Activated T-helper 2 cell treated with anti-CD3 and anti-CD28 coated beads, Interferon-gamma antibody, Interleukin-2, Interleukin-4, amounts not matched to agents 10 μg/mL and 5 μg/mL and 100 μg/mL, durations not matched to agents 14 hours and 24 hours and 36 hours (primary cell): ENCODE measurements at regions of chr18 and their contacts with region 1.

Region 1: DNA sequence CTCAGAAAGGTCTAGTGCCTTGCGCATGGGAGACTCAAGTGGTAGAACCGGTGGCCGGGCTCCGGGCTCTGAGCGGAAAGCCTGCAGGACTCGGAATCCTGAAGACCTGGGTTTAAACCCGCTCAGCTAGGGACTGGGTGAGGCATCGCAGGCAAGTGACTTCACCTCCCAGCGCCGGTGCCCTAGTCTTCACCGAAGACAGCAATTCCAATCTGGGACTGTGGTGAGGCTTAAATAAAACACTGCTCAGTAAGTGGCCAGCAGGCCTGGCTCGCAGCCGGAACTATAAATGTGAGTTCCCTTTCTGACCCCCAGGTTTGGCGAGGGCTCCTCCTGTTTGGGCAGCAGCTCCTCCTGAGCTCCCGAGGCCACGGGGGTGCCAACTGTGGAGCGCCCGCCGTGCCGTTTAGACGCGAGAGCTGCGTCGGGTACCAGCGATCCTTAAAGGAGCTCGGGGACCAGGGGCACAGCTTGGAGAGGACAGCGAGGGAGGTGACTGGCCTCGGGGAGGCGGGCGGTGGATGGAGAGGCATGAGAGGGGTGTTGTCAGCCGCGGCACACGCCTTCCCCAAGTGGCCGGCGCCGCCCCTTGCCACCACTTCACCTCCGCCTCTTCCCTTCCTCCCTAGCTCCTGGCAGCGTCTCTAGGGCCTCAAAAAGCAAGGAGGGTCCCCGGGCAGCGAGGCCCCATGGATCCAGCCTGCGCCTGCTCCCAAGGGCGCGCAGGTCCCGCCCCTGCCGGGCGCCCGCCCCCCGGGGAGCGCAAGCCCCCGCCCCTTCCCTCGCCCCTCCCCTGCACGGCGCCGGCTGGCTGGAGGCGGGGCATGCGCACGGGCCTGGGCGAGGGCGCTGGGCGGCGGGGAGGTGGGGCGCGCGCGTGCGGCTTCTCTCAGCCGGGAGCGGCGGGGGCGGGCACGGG is 736 bp upstream of the MTCL1 start:
- DNase-seq: peak; percentile 77
- H3K4me3 Mint-ChIP-seq: peak overlapping the region; percentile 85
- H3K27ac Mint-ChIP-seq: no peak overlapping the region
- H3K4me1 Mint-ChIP-seq: peaks cover 13% of the 10 kb centered on the region
- H3K27me3 Mint-ChIP-seq: peaks cover 72% of the 10 kb centered on the region

Region 2: DNA sequence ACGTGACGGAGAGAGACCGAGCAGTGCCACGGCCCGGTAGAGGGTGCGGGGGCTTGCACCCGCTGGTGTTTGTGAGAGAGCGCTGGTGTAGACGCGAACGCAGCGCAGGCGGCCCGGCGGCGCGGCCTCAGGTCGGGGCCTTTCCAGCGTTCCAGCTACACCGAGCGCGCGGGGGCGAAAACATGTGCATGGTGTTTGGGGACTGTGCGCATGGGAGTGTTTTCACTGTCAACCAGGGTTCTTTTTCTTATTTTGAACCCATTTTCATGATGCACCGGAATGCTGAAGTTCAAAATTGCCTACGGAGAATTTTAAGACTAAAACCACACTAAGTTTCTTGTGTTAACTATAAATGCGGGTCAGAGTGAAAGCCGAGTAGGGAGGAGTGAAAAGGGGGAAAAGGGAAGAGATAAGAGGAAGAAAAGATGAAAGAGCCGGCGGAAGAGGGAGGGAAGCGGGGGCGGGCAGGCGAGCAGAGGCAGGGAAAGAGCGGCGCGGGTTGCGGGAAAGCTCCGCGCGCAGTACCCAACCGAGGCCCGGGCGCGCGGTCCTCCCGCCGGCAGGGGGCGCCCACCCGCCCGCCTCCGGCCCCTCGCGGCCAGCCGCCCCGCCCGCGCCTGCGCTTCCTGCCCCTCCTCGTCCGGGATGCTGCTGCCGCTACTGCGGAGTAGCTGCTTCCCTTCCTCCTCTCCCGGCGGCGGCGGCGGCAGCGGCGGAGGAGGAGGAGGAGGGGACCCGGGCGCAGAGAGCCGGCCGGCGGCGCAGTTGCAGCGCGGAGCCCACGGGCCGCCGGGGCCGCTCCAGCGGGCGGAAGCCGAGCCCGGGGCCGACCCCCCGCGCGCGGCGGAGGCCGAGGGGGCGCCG is 95.6 kb before region 1 on chr18 and contains the start of gene RAB12:
- intact Hi-C with region 1: loop called (anchors 10 kb)
- DNase-seq: peak; percentile 79
- H3K4me3 Mint-ChIP-seq: peak within 1 kb of the TSS; percentile 94
- H3K27ac Mint-ChIP-seq: peak within 1 kb of the TSS; percentile 85
- H3K4me1 Mint-ChIP-seq: peaks cover 50% of the 10 kb centered on the region
- H3K27me3 Mint-ChIP-seq: peaks cover 20% of the 10 kb centered on the region
- total RNA-seq, gene RAB12: 14.7 and 17.2 TPM in 2 replicates

Region 3: GRCh38 chr18:9334329-9334972 is 629.8 kb after region 1 on chr18 and contains the start of gene TWSG1:
- intact Hi-C with region 1: loop called (anchors 5 kb)
- DNase-seq: peak; percentile 89
- H3K4me3 Mint-ChIP-seq: peak within 1 kb of the TSS; percentile 84
- H3K27ac Mint-ChIP-seq: peak within 1 kb of the TSS; percentile 65
- H3K4me1 Mint-ChIP-seq: peaks cover 19% of the 10 kb centered on the region
- H3K27me3 Mint-ChIP-seq: peaks cover 25% of the 10 kb centered on the region
- total RNA-seq, gene TWSG1: 12.1 and 12.9 TPM in 2 replicates